ENCODE measurements at regions of chr6 and their contacts with region 1.

Region 1: GRCh38 chr6:34602318-34603111 is 46.4 kb upstream of the SPDEF start:
- DNase-seq: no peak
- H3K4me3 ChIP-seq: no peak overlapping the region
- H3K27ac ChIP-seq: no peak overlapping the region
- H3K4me1 ChIP-seq: peaks cover 0 to 30% (median 3%) of the 10 kb centered on the region in 6 donors
- H3K27me3 ChIP-seq: no peaks in the 10 kb centered on the region
- CTCF ChIP-seq: no peak
- POLR2A ChIP-seq: no peak

Region 2: GRCh38 chr6:34161857-34162515 is 440.5 kb before region 1 on chr6:
- intact Hi-C with region 1: no loop called
- DNase-seq: peak; percentile 40
- H3K4me3 ChIP-seq: no peak overlapping the region
- H3K27ac ChIP-seq: no peak overlapping the region
- H3K4me1 ChIP-seq: peaks cover 0 to 6% (median 0%) of the 10 kb centered on the region in 6 donors
- H3K27me3 ChIP-seq: no peaks in the 10 kb centered on the region
- CTCF ChIP-seq: no peak
- POLR2A ChIP-seq: no peak

Region 3: GRCh38 chr6:34526992-34527728 is 75.4 kb before region 1 on chr6:
- intact Hi-C with region 1: loop called (anchors 10 kb)
- DNase-seq: peak; percentile 99
- H3K4me3 ChIP-seq: peak overlapping the region in 5 of 8 donors; percentile 16 to 57 (median 20)
- H3K27ac ChIP-seq: peak overlapping the region in 5 of 8 donors; percentile 47 to 54 (median 52)
- H3K4me1 ChIP-seq: peaks cover 6 to 19% (median 13%) of the 10 kb centered on the region in 6 donors
- H3K27me3 ChIP-seq: no peaks in the 10 kb centered on the region
- CTCF ChIP-seq: peak; percentile 18 to 96 (median 89)
- POLR2A ChIP-seq: no peak

Measured in spleen (tissue), 13 donors.